ENCODE measurements at regions of chr6 and their contacts with region 1.

Region 1: GRCh38 chr6:137341681-137342195 is 122.6 kb upstream of the IFNGR1 start:
- DNase-seq: peak; percentile 54
- ATAC-seq: peak; percentile 49
- H3K4me3 Mint-ChIP-seq: peak overlapping the region; percentile 65
- H3K27ac Mint-ChIP-seq: no peak overlapping the region
- H3K4me1 Mint-ChIP-seq: peaks cover 5% of the 10 kb centered on the region
- H3K27me3 Mint-ChIP-seq: no peaks in the 10 kb centered on the region
- CTCF ChIP-seq: peak; percentile 57

Region 2: GRCh38 chr6:137218917-137219663 is 122.6 kb before region 1 on chr6 and contains the start of gene IFNGR1:
- CTCF ChIA-PET with region 1: no interaction called
- POLR2A ChIA-PET with region 1: no interaction called
- intact Hi-C with region 1: no loop called
- DNase-seq: peak; percentile 98
- ATAC-seq: peak; percentile 81
- H3K4me3 Mint-ChIP-seq: peak within 1 kb of the TSS; percentile 90
- H3K27ac Mint-ChIP-seq: peak within 1 kb of the TSS; percentile 96
- H3K4me1 Mint-ChIP-seq: peaks cover 41% of the 10 kb centered on the region
- H3K27me3 Mint-ChIP-seq: no peaks in the 10 kb centered on the region
- CTCF ChIP-seq: no peak
- total RNA-seq, gene IFNGR1: 25.6 to 26.8 TPM

Region 3: GRCh38 chr6:137415127-137415833 is 73.5 kb after region 1 on chr6:
- CTCF ChIA-PET with region 1: interaction called, 46 read pairs
- POLR2A ChIA-PET with region 1: interaction called, 3 read pairs
- intact Hi-C with region 1: loop called (anchors 1 kb)
- DNase-seq: peak; percentile 76
- ATAC-seq: peak; percentile 97
- H3K4me3 Mint-ChIP-seq: peak overlapping the region; percentile 72
- H3K27ac Mint-ChIP-seq: peak overlapping the region; percentile 58
- H3K4me1 Mint-ChIP-seq: peaks cover 8% of the 10 kb centered on the region
- H3K27me3 Mint-ChIP-seq: no peaks in the 10 kb centered on the region
- CTCF ChIP-seq: peak; percentile 78

Region 4: GRCh38 chr6:137560184-137560563 is 218.4 kb after region 1 on chr6:
- CTCF ChIA-PET with region 1: no interaction called
- POLR2A ChIA-PET with region 1: no interaction called
- intact Hi-C with region 1: no loop called
- DNase-seq: no peak
- ATAC-seq: no peak
- H3K4me3 Mint-ChIP-seq: no peak overlapping the region
- H3K27ac Mint-ChIP-seq: peak overlapping the region; percentile 44
- H3K4me1 Mint-ChIP-seq: peaks cover 28% of the 10 kb centered on the region
- H3K27me3 Mint-ChIP-seq: no peaks in the 10 kb centered on the region
- CTCF ChIP-seq: peak; percentile 2

Region 5: DNA sequence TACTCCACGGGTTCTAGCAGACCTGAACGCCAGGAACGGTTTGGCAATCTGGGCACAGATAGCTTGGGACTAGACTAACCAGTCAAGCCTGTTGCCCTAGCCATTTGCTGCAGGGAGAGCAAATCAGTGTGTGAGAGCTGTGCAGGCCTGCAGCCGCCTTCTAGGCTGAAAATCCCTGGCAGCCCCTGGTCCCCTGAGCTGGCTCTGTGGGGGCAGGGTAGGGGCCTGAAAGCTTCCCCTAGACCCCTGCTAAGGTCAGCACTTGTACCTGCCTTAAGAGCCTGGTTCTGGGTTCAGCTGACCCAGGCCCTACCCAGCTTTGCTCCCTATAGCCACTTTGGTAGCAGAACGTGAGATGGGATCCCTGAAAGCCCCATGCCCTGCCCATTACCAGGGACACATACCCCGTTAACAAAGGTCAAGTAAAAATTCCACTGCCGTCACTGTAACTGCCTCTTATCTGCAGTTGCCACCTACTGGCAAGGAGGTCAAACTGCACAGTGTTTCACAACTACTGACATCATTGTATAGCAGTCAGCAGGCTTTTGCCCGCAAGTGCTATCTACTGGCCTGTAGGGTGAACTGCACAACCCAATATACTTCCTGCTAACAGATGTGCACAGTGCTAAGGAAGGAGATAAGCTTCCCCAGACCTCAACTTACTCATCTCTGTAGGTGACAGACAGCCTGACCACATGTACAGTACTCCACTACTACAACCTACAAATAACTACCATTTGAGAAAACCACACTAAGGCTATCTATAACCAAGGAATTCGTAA is 247.5 kb after region 1 on chr6:
- CTCF ChIA-PET with region 1: interaction called, 17 read pairs
- POLR2A ChIA-PET with region 1: no interaction called
- intact Hi-C with region 1: no loop called
- DNase-seq: peak; percentile 71
- ATAC-seq: peak; percentile 100
- H3K4me3 Mint-ChIP-seq: no peak overlapping the region
- H3K27ac Mint-ChIP-seq: no peak overlapping the region
- H3K4me1 Mint-ChIP-seq: peaks cover 8% of the 10 kb centered on the region
- H3K27me3 Mint-ChIP-seq: no peaks in the 10 kb centered on the region
- CTCF ChIP-seq: peak; percentile 84

Region 6: GRCh38 chr6:137641474-137642077 is 299.8 kb after region 1 on chr6:
- CTCF ChIA-PET with region 1: interaction called, 6 read pairs
- POLR2A ChIA-PET with region 1: no interaction called
- intact Hi-C with region 1: loop called (anchors 10 kb)
- DNase-seq: peak; percentile 83
- ATAC-seq: peak; percentile 75
- H3K4me3 Mint-ChIP-seq: no peak overlapping the region
- H3K27ac Mint-ChIP-seq: no peak overlapping the region
- H3K4me1 Mint-ChIP-seq: peaks cover 15% of the 10 kb centered on the region
- H3K27me3 Mint-ChIP-seq: peaks cover 7% of the 10 kb centered on the region
- CTCF ChIP-seq: peak; percentile 90

Measured in activated CD8-positive, alpha-beta T cell treated with anti-CD3 and anti-CD28 coated beads for 36 hours (primary cell).